ENCODE measurements at regions of chr3 and their contacts with region 1.

Region 1: GRCh38 chr3:184505076-184505878 is 56.3 kb upstream of the EPHB3 start:
- DNase-seq: no peak
- ATAC-seq: no peak
- H3K4me3 ChIP-seq: no peak overlapping the region
- H3K27ac ChIP-seq: no peak overlapping the region
- H3K4me1 ChIP-seq: no peaks in the 10 kb centered on the region
- H3K27me3 ChIP-seq: peaks cover 34% of the 10 kb centered on the region
- CTCF ChIP-seq: no peak

Region 2: GRCh38 chr3:184489268-184489841 is 15.9 kb before region 1 on chr3:
- CTCF ChIA-PET with region 1: no interaction called
- POLR2A ChIA-PET with region 1: interaction called, 10 read pairs
- in situ Hi-C with region 1: no loop called
- intact Hi-C with region 1: no loop called
- DNase-seq: no peak
- ATAC-seq: no peak
- H3K4me3 ChIP-seq: no peak overlapping the region
- H3K27ac ChIP-seq: no peak overlapping the region
- H3K4me1 ChIP-seq: peaks cover 8% of the 10 kb centered on the region; the same call in 1 of the 2 replicates
- H3K27me3 ChIP-seq: peaks cover 51% of the 10 kb centered on the region
- CTCF ChIP-seq: no peak

Region 3: DNA sequence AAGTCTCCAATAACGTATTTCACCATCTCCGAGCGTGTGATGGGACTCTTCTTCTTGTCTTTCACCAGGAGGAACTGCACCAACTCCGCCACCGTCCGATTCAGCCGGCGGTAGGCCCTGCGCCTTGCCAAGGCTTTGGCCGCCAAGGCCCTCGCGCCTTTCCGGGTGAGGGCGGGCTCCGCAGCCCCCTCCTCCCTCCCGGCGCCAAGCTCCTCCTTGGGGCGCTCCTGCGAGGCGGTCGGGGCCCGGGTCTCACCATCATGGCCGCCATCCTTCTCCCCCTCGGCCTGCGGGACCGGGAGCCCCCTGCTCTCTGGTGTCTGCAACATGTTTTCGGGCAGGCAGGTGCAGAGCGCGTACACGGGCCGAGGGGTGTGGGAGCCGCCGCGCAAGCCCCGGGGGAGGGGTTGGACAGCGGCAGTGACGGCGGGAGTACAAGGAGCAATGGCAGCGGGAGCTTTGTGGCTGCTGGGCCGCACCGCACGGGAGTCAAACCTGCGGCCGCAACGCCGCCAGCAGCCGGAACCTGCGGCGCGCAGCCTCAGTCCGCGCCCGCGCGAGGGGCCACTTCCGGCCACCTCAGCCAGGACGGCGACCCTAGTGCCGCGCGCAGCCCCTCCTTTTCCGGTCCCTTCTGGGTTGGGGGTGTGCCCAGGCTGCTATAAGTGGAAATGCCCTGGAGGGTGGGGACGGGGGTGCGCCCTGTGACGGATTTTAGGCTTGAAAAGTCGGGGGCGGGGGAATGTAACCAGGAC is 206.4 kb after region 1 on chr3 and contains the start of gene MAGEF1:
- CTCF ChIA-PET with region 1: no interaction called
- POLR2A ChIA-PET with region 1: interaction called, 13 read pairs
- in situ Hi-C with region 1: no loop called
- intact Hi-C with region 1: no loop called
- DNase-seq: no peak
- ATAC-seq: peak; percentile 99
- H3K4me3 ChIP-seq: peak within 1 kb of the TSS; percentile 90 to 92
- H3K27ac ChIP-seq: peak within 1 kb of the TSS; percentile 92
- H3K4me1 ChIP-seq: peaks cover 9% of the 10 kb centered on the region
- H3K27me3 ChIP-seq: no peaks in the 10 kb centered on the region
- CTCF ChIP-seq: no peak
- total RNA-seq, gene MAGEF1: 27.7 TPM

Region 4: GRCh38 chr3:184848934-184849333 is 343.7 kb after region 1 on chr3:
- CTCF ChIA-PET with region 1: no interaction called
- POLR2A ChIA-PET with region 1: no interaction called
- in situ Hi-C with region 1: no loop called
- intact Hi-C with region 1: no loop called
- DNase-seq: no peak
- ATAC-seq: no peak
- H3K4me3 ChIP-seq: no peak overlapping the region
- H3K27ac ChIP-seq: no peak overlapping the region
- H3K4me1 ChIP-seq: 0 out of 2 replicates have a peak, but pooled peaks cover under 1% of the 10 kb centered on the region
- H3K27me3 ChIP-seq: no peaks in the 10 kb centered on the region
- CTCF ChIP-seq: no peak

Region 5: GRCh38 chr3:185207931-185208746 is 702.9 kb after region 1 on chr3:
- CTCF ChIA-PET with region 1: no interaction called
- POLR2A ChIA-PET with region 1: interaction called, 19 read pairs
- in situ Hi-C with region 1: no loop called
- intact Hi-C with region 1: no loop called
- DNase-seq: no peak
- ATAC-seq: no peak
- H3K4me3 ChIP-seq: no peak overlapping the region
- H3K27ac ChIP-seq: no peak overlapping the region
- H3K4me1 ChIP-seq: no peaks in the 10 kb centered on the region
- H3K27me3 ChIP-seq: no peaks in the 10 kb centered on the region
- CTCF ChIP-seq: no peak

Measured in Panc1 (cell line).